ENCODE measurements at regions of chr11 and their contacts with region 1.

Region 1: DNA sequence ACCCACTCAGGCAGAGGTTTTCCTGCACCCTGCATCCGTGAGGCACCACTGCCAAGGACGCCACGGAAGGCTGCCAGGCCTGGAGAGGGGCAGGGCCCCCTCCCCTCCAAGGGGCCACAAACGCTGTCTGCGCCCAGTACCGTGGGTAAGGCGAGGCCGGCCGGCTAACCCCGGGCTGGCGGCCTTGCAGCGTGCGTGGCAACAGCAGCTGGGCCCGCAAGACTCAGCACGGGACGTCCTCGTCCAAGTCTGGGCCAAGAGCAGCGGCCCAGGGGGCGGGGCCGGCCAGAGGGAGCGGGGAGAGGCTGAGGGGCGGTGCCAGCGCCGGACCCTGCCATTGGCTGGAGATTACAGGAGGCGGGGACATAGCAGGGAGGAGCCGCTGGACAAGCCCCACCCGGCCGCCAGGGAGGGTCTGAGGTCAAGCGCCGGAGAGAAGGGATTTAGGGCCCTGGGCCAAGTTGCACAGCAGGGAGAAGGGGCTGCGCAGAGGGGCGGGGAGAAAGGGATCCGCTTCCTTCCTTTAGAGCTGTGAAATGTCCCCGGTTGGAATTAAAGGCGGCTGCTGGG is 16.0 kb downstream of the SLC43A1 start:
- DNase-seq: no peak
- ATAC-seq: peak; percentile 54
- H3K4me3 Mint-ChIP-seq: no peak overlapping the region
- H3K27ac Mint-ChIP-seq: no peak overlapping the region
- H3K4me1 Mint-ChIP-seq: no peaks in the 10 kb centered on the region
- H3K27me3 Mint-ChIP-seq: no peaks in the 10 kb centered on the region

Region 2: GRCh38 chr11:57515332-57516060 is 16.0 kb after region 1 on chr11 and contains the start of gene SLC43A1:
- CTCF ChIA-PET with region 1: interaction called, 106 read pairs
- DNase-seq: peak; percentile 61
- ATAC-seq: peak; percentile 63
- H3K4me3 Mint-ChIP-seq: peak within 1 kb of the TSS; percentile 96
- H3K27ac Mint-ChIP-seq: peak within 1 kb of the TSS; percentile 89
- H3K4me1 Mint-ChIP-seq: peaks cover 30% of the 10 kb centered on the region
- H3K27me3 Mint-ChIP-seq: no peaks in the 10 kb centered on the region
- total RNA-seq, gene SLC43A1: 24.6 to 25.8 TPM

Region 3: GRCh38 chr11:57711414-57712255 is 212.1 kb after region 1 on chr11 and contains the start of gene MED19:
- CTCF ChIA-PET with region 1: no interaction called
- DNase-seq: peak; percentile 88
- ATAC-seq: peak; percentile 41
- H3K4me3 Mint-ChIP-seq: peak within 1 kb of the TSS; percentile 99
- H3K27ac Mint-ChIP-seq: peak within 1 kb of the TSS; percentile 91
- H3K4me1 Mint-ChIP-seq: peaks cover 59% of the 10 kb centered on the region
- H3K27me3 Mint-ChIP-seq: no peaks in the 10 kb centered on the region
- total RNA-seq, gene MED19: 11.7 to 14.9 TPM